ENCODE measurements at regions of chr1 and their contacts with region 1.

Region 1: GRCh38 chr1:39091845-39092645 is 65.9 kb downstream of the NDUFS5 start:
- DNase-seq: peak; percentile 39
- ATAC-seq: peak; percentile 88
- H3K4me3 ChIP-seq: no peak overlapping the region
- H3K27ac ChIP-seq: no peak overlapping the region
- H3K4me1 ChIP-seq: peaks cover 0 to 6% of the 10 kb centered on the region in 2 experiments; a peak in 2 of 4 replicates
- H3K27me3 ChIP-seq: no peaks in the 10 kb centered on the region
- CTCF ChIP-seq: peak; percentile 74 to 85 (median 80)
- POLR2A ChIP-seq: no peak
- RAD21 ChIP-seq: peak; percentile 91

Region 2: DNA sequence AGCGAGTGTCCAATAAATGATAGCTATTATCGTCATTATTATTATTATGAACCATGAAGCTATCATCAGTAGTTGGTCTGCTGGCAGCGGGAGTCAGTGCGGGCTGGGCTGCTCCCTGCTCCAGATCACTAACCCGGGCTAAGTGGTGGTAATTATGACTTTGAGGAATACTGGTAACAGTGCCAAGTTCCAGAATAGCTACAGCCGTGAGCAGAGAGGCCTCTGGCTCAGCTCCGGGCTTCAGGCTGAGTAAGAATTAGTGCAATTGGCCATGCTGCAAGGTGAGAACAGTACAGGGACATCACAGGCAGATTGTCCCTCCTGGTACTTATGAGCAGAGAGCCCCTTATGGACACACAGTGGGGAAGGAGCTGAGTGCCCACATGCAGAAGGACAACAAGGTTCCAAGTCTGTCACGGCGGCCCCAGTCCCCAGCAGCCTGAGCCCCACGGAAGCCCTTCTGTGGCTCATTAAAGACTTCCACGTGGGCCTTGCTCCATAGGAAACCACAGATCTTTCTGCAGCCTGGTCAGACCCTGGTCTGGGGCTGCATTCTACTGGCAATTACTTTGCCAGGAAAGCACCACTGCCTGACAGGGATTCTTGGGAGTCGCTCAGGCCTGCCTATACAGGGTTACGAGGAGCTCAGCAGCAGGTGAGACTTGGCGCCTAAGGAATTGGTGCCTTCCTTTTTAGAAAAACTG is 467.6 kb before region 1 on chr1:
- CTCF ChIA-PET with region 1: no interaction called
- POLR2A ChIA-PET with region 1: no interaction called
- RAD21 ChIA-PET with region 1: no interaction called
- intact Hi-C with region 1: no loop called
- DNase-seq: no peak
- ATAC-seq: no peak
- H3K4me3 ChIP-seq: no peak overlapping the region
- H3K27ac ChIP-seq: no peak overlapping the region
- H3K4me1 ChIP-seq: no peaks in the 10 kb centered on the region
- H3K27me3 ChIP-seq: peaks cover 3% of the 10 kb centered on the region; the same call in 1 of the 2 replicates
- CTCF ChIP-seq: no peak
- POLR2A ChIP-seq: no peak
- RAD21 ChIP-seq: no peak

Region 3: GRCh38 chr1:38790422-38791163 is 301.5 kb before region 1 on chr1:
- CTCF ChIA-PET with region 1: no interaction called
- POLR2A ChIA-PET with region 1: no interaction called
- RAD21 ChIA-PET with region 1: no interaction called
- intact Hi-C with region 1: no loop called
- DNase-seq: no peak
- ATAC-seq: no peak
- H3K4me3 ChIP-seq: no peak overlapping the region
- H3K27ac ChIP-seq: no peak overlapping the region
- H3K4me1 ChIP-seq: peaks cover 19 to 20% of the 10 kb centered on the region in 2 experiments
- H3K27me3 ChIP-seq: peaks cover 6% of the 10 kb centered on the region; the same call in 1 of the 2 replicates
- CTCF ChIP-seq: no peak
- POLR2A ChIP-seq: no peak
- RAD21 ChIP-seq: no peak

Region 4: GRCh38 chr1:38873027-38873969 is 218.7 kb before region 1 on chr1 and contains the start of gene MYCBP:
- CTCF ChIA-PET with region 1: interaction called, 3 read pairs
- POLR2A ChIA-PET with region 1: no interaction called
- RAD21 ChIA-PET with region 1: no interaction called
- intact Hi-C with region 1: loop called (anchors 5 kb)
- DNase-seq: peak; percentile 89
- ATAC-seq: peak; percentile 99
- H3K4me3 ChIP-seq: peak within 1 kb of the TSS; percentile 88 to 93
- H3K27ac ChIP-seq: peak within 1 kb of the TSS; percentile 32
- H3K4me1 ChIP-seq: peaks cover 10 to 15% of the 10 kb centered on the region in 2 experiments; a peak in 3 of 4 replicates
- H3K27me3 ChIP-seq: no peaks in the 10 kb centered on the region
- CTCF ChIP-seq: no peak
- POLR2A ChIP-seq: peak; percentile 78
- RAD21 ChIP-seq: no peak
- total RNA-seq, gene MYCBP: 40.2 TPM

Region 5: GRCh38 chr1:38958967-38959366 is 133.1 kb before region 1 on chr1:
- CTCF ChIA-PET with region 1: interaction called, 19 read pairs
- POLR2A ChIA-PET with region 1: no interaction called
- RAD21 ChIA-PET with region 1: interaction called, 3 to 8 read pairs
- intact Hi-C with region 1: loop called (anchors 1 kb)
- DNase-seq: no peak
- ATAC-seq: peak; percentile 72
- H3K4me3 ChIP-seq: peak overlapping the region in 1 of 2 experiments; percentile 40; a peak in 2 of 4 replicates
- H3K27ac ChIP-seq: peak overlapping the region; percentile 85
- H3K4me1 ChIP-seq: peaks cover 33 to 54% of the 10 kb centered on the region in 2 experiments
- H3K27me3 ChIP-seq: no peaks in the 10 kb centered on the region
- CTCF ChIP-seq: no peak
- POLR2A ChIP-seq: no peak
- RAD21 ChIP-seq: no peak; the same call in 1 of the 2 replicates

Region 6: GRCh38 chr1:39081266-39082009 is 10.6 kb before region 1 on chr1:
- CTCF ChIA-PET with region 1: interaction called, 10 read pairs
- POLR2A ChIA-PET with region 1: interaction called, 4 read pairs
- RAD21 ChIA-PET with region 1: no interaction called
- intact Hi-C with region 1: no loop called
- DNase-seq: no peak
- ATAC-seq: peak; percentile 75
- H3K4me3 ChIP-seq: peak overlapping the region; percentile 36 to 51; a peak in 3 of 4 replicates
- H3K27ac ChIP-seq: no peak overlapping the region; the same call in 1 of the 2 replicates
- H3K4me1 ChIP-seq: peaks cover 2 to 14% of the 10 kb centered on the region in 2 experiments
- H3K27me3 ChIP-seq: peaks cover 5% of the 10 kb centered on the region; the same call in 1 of the 2 replicates
- CTCF ChIP-seq: no peak
- POLR2A ChIP-seq: no peak
- RAD21 ChIP-seq: no peak

Region 7: GRCh38 chr1:39538588-39539465 is 446.8 kb after region 1 on chr1:
- CTCF ChIA-PET with region 1: interaction called, 11 read pairs
- POLR2A ChIA-PET with region 1: no interaction called
- RAD21 ChIA-PET with region 1: no interaction called
- intact Hi-C with region 1: no loop called
- DNase-seq: peak; percentile 49
- ATAC-seq: peak; percentile 99
- H3K4me3 ChIP-seq: no peak overlapping the region
- H3K27ac ChIP-seq: no peak overlapping the region
- H3K4me1 ChIP-seq: peaks cover 0 to 3% of the 10 kb centered on the region in 2 experiments; a peak in 2 of 4 replicates
- H3K27me3 ChIP-seq: no peaks in the 10 kb centered on the region
- CTCF ChIP-seq: peak; percentile 83 to 94 (median 91)
- POLR2A ChIP-seq: no peak
- RAD21 ChIP-seq: peak; percentile 98